ENCODE measurements at regions of chr12 and their contacts with region 1.

Region 1: GRCh38 chr12:13211859-13212664 is 15.5 kb downstream of the EMP1 start:
- DNase-seq: peak; percentile 68
- ATAC-seq: peak; percentile 27
- H3K4me3 Mint-ChIP-seq: no peak overlapping the region; the same call in 1 of the 2 replicates
- H3K27ac Mint-ChIP-seq: peak overlapping the region; percentile 82
- H3K4me1 Mint-ChIP-seq: peaks cover 31% of the 10 kb centered on the region
- H3K27me3 Mint-ChIP-seq: no peaks in the 10 kb centered on the region
- CTCF ChIP-seq: peak; percentile 49; the same call in 1 of the 2 replicates

Region 2: DNA sequence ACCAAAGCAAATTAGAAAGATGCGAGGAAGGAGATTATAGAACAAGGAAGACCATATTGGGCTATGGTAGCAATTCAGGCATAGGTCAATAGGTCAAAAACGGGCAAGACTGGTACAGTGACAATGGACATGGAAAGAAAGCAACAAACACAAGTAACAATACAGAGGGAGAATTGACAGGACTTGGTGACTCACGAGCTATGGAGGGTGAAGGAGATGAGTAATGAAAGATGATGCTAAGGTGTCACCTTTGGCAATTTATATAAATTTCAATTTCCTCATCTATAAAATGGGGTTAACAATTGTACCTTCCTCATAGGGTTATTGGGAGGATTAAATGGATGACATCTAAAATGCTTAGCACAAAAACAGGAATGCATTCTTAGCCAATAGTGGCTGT is 634.3 kb before region 1 on chr12:
- CTCF ChIA-PET with region 1: no interaction called
- POLR2A ChIA-PET with region 1: no interaction called
- DNase-seq: no peak
- ATAC-seq: no peak
- H3K4me3 Mint-ChIP-seq: no peak overlapping the region
- H3K27ac Mint-ChIP-seq: no peak overlapping the region
- H3K4me1 Mint-ChIP-seq: no peaks in the 10 kb centered on the region
- H3K27me3 Mint-ChIP-seq: no peaks in the 10 kb centered on the region
- CTCF ChIP-seq: no peak

Region 3: GRCh38 chr12:12837025-12837872 is 374.8 kb before region 1 on chr12:
- CTCF ChIA-PET with region 1: interaction called, 37 read pairs
- POLR2A ChIA-PET with region 1: no interaction called
- DNase-seq: peak; percentile 16
- ATAC-seq: peak; percentile 87
- H3K4me3 Mint-ChIP-seq: no peak overlapping the region
- H3K27ac Mint-ChIP-seq: no peak overlapping the region
- H3K4me1 Mint-ChIP-seq: peaks cover 9% of the 10 kb centered on the region
- H3K27me3 Mint-ChIP-seq: no peaks in the 10 kb centered on the region
- CTCF ChIP-seq: no peak

Region 4: DNA sequence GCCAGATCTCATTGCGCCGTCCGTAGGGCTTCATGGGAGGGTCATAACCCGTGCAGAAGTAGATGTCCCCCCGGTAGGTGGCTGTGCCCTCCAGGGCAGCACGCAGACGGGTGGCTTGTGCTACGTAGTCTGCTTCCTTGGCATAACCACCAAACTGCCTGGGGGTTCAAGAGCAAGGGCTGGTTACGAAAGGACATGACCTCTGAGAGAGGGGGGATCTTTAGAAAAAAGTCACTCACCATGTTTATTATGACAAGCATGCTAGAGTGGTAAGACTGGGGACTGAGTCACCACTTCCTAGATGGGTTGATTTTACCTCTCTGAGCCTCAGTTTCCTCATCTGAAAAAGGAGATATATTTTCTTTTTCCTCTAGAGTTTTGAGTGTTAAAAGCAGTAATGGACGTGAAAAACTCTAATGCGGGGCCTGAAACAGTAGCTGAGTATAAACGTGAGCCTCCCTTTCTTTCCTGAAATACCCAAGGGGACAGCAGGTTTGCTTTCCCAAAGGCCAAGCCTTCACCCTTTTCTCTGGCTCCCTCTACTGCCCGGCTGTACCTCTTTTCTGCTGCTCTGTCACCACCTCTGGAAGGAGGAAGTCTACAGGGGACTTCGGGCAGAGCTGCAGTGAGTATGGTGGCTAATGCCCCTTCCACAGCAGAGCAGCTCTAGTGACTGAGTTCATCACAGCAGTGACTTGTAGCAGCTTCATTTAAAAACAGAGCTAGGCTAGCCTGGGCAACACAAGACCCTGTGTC is 236.6 kb before region 1 on chr12:
- CTCF ChIA-PET with region 1: interaction called, 22 read pairs
- POLR2A ChIA-PET with region 1: no interaction called
- DNase-seq: peak; percentile 62
- ATAC-seq: peak; percentile 99
- H3K4me3 Mint-ChIP-seq: no peak overlapping the region
- H3K27ac Mint-ChIP-seq: no peak overlapping the region
- H3K4me1 Mint-ChIP-seq: no peaks in the 10 kb centered on the region
- H3K27me3 Mint-ChIP-seq: peaks cover 3% of the 10 kb centered on the region; the same call in 1 of the 2 replicates
- CTCF ChIP-seq: no peak

Region 5: GRCh38 chr12:13079440-13079906 is 132.6 kb before region 1 on chr12:
- CTCF ChIA-PET with region 1: interaction called, 14 read pairs
- POLR2A ChIA-PET with region 1: no interaction called
- DNase-seq: no peak
- ATAC-seq: peak; percentile 95
- H3K4me3 Mint-ChIP-seq: no peak overlapping the region
- H3K27ac Mint-ChIP-seq: peak overlapping the region; percentile 70
- H3K4me1 Mint-ChIP-seq: peaks cover 13% of the 10 kb centered on the region
- H3K27me3 Mint-ChIP-seq: no peaks in the 10 kb centered on the region
- CTCF ChIP-seq: no peak

Region 6: DNA sequence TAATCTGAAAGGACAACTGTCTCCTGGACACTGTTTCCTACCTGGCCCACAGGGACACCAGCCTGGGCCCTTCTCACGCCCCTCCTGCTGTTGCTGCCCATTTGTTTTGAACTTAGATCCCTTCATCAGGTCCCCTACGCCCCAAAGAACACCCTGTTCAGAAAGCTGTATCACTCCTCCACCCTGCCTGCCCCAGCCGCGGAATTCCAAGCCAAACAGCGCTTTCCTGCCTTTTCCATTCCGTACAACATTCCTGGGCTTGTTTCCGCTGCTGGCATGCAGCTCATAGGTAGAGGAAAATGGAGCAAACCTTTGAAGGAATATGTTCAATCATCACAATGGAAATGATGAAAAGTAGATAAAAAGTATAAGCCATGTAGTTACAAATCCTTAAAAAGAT is 95.8 kb before region 1 on chr12:
- CTCF ChIA-PET with region 1: interaction called, 18 read pairs
- POLR2A ChIA-PET with region 1: no interaction called
- DNase-seq: no peak
- ATAC-seq: peak; percentile 38; the same call in 1 of the 2 replicates
- H3K4me3 Mint-ChIP-seq: no peak overlapping the region
- H3K27ac Mint-ChIP-seq: no peak overlapping the region
- H3K4me1 Mint-ChIP-seq: peaks cover 31% of the 10 kb centered on the region
- H3K27me3 Mint-ChIP-seq: no peaks in the 10 kb centered on the region
- CTCF ChIP-seq: no peak

Region 7: GRCh38 chr12:13255792-13256691 is 44.0 kb after region 1 on chr12:
- CTCF ChIA-PET with region 1: interaction called, 16 read pairs
- POLR2A ChIA-PET with region 1: no interaction called
- DNase-seq: peak; percentile 98
- ATAC-seq: peak; percentile 93
- H3K4me3 Mint-ChIP-seq: peak overlapping the region; percentile 53
- H3K27ac Mint-ChIP-seq: peak overlapping the region; percentile 94
- H3K4me1 Mint-ChIP-seq: peaks cover 32% of the 10 kb centered on the region
- H3K27me3 Mint-ChIP-seq: peaks cover 21% of the 10 kb centered on the region
- CTCF ChIP-seq: peak; percentile 94

Region 8: DNA sequence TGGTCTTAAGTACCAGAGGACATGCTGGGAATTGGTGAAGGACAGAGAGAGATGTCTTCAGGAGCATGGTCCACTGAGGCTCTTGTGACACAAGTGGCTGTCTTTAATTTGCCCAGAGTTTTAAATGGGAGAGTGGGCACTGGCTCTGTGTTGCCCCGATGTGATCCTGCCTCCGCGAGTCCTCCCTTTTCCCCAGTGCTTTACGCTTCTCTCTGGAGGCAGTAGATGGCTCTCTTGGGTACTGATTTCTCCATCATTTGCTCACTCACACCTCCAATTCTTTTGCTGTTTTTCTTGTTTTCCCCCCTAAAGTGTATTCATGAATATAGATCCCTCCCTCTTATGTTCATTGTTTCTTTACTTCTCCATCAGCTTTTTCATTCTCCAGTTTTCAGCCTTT is 58.8 kb after region 1 on chr12:
- CTCF ChIA-PET with region 1: no interaction called
- POLR2A ChIA-PET with region 1: no interaction called
- DNase-seq: no peak
- ATAC-seq: peak; percentile 57
- H3K4me3 Mint-ChIP-seq: no peak overlapping the region
- H3K27ac Mint-ChIP-seq: no peak overlapping the region
- H3K4me1 Mint-ChIP-seq: peaks cover 22% of the 10 kb centered on the region
- H3K27me3 Mint-ChIP-seq: no peaks in the 10 kb centered on the region; the same call in none of the 2 replicates
- CTCF ChIP-seq: no peak

Region 9: GRCh38 chr12:13570005-13570694 is 358.1 kb after region 1 on chr12:
- CTCF ChIA-PET with region 1: no interaction called
- POLR2A ChIA-PET with region 1: no interaction called
- DNase-seq: no peak
- ATAC-seq: no peak
- H3K4me3 Mint-ChIP-seq: no peak overlapping the region
- H3K27ac Mint-ChIP-seq: no peak overlapping the region
- H3K4me1 Mint-ChIP-seq: no peaks in the 10 kb centered on the region
- H3K27me3 Mint-ChIP-seq: no peaks in the 10 kb centered on the region
- CTCF ChIP-seq: no peak

Measured in WTC11 (cell line).